WTC11 (cell line): ENCODE measurements at regions of chr6 and their contacts with region 1.

Region 1: GRCh38 chr6:33592411-33593054 is 12.5 kb upstream of the BAK1 start:
- DNase-seq: peak; percentile 84
- ATAC-seq: peak; percentile 75
- H3K4me3 Mint-ChIP-seq: peak overlapping the region; percentile 60
- H3K27ac Mint-ChIP-seq: peak overlapping the region; percentile 93
- H3K4me1 Mint-ChIP-seq: peaks cover 35% of the 10 kb centered on the region
- H3K27me3 Mint-ChIP-seq: no peaks in the 10 kb centered on the region; the same call in none of the 2 replicates
- CTCF ChIP-seq: no peak

Region 2: DNA sequence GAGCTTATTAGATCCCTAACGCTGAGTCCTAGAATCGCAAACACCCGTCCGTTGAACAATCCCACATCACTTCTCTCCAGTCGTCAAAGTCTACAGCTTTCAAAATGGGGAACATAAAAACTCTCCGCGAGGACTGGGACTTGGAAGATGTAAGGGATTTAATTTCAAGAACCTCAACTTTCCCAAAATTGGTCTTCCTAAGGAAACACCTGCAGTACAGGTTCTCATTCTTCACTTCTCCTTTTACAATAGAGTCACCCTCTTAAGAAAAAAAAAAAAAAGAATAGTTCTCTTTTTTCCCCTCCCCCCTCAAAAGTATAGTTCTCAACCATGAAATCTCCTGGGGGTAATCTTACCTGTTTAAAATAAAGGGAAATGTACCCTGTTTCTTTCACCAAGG is 268.4 kb before region 1 on chr6:
- CTCF ChIA-PET with region 1: no interaction called
- POLR2A ChIA-PET with region 1: interaction called, 11 read pairs
- DNase-seq: no peak
- ATAC-seq: no peak
- H3K4me3 Mint-ChIP-seq: peak overlapping the region; percentile 91
- H3K27ac Mint-ChIP-seq: no peak overlapping the region
- H3K4me1 Mint-ChIP-seq: peaks cover 45% of the 10 kb centered on the region
- H3K27me3 Mint-ChIP-seq: no peaks in the 10 kb centered on the region
- CTCF ChIP-seq: no peak

Region 3: GRCh38 chr6:33502486-33502885 is 90.0 kb before region 1 on chr6:
- CTCF ChIA-PET with region 1: no interaction called
- POLR2A ChIA-PET with region 1: no interaction called
- DNase-seq: no peak
- ATAC-seq: no peak
- H3K4me3 Mint-ChIP-seq: no peak overlapping the region
- H3K27ac Mint-ChIP-seq: no peak overlapping the region
- H3K4me1 Mint-ChIP-seq: peaks cover 9% of the 10 kb centered on the region
- H3K27me3 Mint-ChIP-seq: peaks cover 11% of the 10 kb centered on the region
- CTCF ChIP-seq: no peak

Region 4: DNA sequence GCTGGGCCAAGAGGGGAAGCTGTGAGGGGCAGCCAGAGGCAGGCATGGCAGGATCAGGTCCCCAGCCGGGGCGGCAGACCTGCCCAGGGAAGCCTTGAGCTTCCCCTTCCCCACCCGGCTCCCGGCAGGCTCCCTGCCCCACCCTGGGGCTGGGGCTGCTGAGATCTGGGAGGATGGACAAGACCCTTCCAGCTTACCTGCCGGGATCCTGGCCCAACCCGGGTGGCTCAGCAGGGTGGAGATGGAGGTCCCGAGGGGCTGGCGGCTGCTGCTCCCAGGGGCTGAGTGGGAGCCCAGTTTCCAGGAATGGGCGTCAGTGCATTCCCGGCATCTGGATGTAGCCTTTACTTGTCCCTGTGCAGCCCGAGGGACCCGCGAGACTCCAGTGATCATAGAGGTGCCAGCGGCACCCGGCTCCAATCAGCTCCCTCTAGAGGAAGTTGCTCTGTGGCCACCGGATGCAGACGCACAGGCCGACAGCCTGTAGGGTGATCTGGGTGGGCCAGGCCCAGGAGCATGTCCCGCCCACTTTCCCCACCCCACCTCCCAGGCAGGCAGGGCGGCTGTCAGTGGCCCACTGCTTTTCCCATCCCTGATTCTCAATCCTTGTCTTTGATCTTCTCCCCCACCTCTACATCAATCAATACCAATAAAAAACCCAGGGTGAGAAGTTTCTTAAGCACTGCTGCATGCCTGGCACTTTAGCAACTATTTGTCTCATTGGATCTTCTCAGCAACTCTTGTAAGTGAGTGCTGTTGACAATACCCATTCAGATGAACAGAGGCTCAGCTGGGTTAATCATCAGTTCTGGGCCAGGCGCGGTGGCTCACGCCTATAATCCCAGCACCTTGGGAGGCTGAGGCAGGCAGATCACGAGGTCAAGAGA is 12.5 kb before region 1 on chr6 and contains the start of gene BAK1:
- CTCF ChIA-PET with region 1: interaction called, 17 read pairs
- POLR2A ChIA-PET with region 1: no interaction called
- DNase-seq: peak; percentile 91
- ATAC-seq: peak; percentile 96
- H3K4me3 Mint-ChIP-seq: peak within 1 kb of the TSS; percentile 77
- H3K27ac Mint-ChIP-seq: no peak within 1 kb of the TSS
- H3K4me1 Mint-ChIP-seq: peaks cover 14% of the 10 kb centered on the region
- H3K27me3 Mint-ChIP-seq: no peaks in the 10 kb centered on the region
- CTCF ChIP-seq: no peak
- total RNA-seq, gene BAK1: 40.5 to 40.9 TPM (median 40.5 TPM) in 3 replicates

Region 5: DNA sequence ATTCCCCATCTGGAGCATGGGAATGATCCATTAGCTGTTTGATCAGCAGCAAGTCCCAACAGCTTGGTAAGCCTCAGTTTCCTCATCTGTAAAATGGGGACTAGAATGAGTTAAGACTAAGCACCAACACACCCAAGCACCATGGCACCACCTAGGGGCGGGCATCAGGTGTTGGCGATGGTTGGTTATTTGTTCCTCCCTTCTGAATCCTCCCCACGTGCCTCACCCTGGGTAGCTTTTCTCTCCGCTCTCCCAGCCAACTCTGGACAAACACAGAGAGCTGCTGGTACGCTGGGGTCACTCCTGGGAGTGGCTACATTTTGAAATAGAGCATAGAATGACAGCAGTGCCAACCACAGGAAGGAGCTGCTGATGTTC is 15.2 kb after region 1 on chr6:
- CTCF ChIA-PET with region 1: interaction called, 29 read pairs
- POLR2A ChIA-PET with region 1: no interaction called
- DNase-seq: no peak
- ATAC-seq: no peak
- H3K4me3 Mint-ChIP-seq: no peak overlapping the region
- H3K27ac Mint-ChIP-seq: no peak overlapping the region
- H3K4me1 Mint-ChIP-seq: peaks cover 45% of the 10 kb centered on the region
- H3K27me3 Mint-ChIP-seq: no peaks in the 10 kb centered on the region; the same call in 1 of the 2 replicates
- CTCF ChIP-seq: no peak

Region 6: GRCh38 chr6:33620856-33621710 is 28.6 kb after region 1 on chr6 and contains the start of gene ITPR3:
- CTCF ChIA-PET with region 1: interaction called, 31 read pairs
- POLR2A ChIA-PET with region 1: interaction called, 10 read pairs
- DNase-seq: no peak
- ATAC-seq: peak; percentile 47
- H3K4me3 Mint-ChIP-seq: peak within 1 kb of the TSS; percentile 91
- H3K27ac Mint-ChIP-seq: no peak within 1 kb of the TSS; the same call in 1 of the 2 replicates
- H3K4me1 Mint-ChIP-seq: peaks cover 46% of the 10 kb centered on the region
- H3K27me3 Mint-ChIP-seq: peaks cover 15% of the 10 kb centered on the region
- CTCF ChIP-seq: no peak
- total RNA-seq, gene ITPR3: 42.5 to 47.3 TPM (median 42.9 TPM) in 3 replicates

Region 7: GRCh38 chr6:33633462-33634158 is 41.1 kb after region 1 on chr6:
- CTCF ChIA-PET with region 1: interaction called, 71 read pairs
- POLR2A ChIA-PET with region 1: no interaction called
- DNase-seq: peak; percentile 58
- ATAC-seq: peak; percentile 69
- H3K4me3 Mint-ChIP-seq: peak overlapping the region; percentile 83
- H3K27ac Mint-ChIP-seq: peak overlapping the region; percentile 47
- H3K4me1 Mint-ChIP-seq: peaks cover 59% of the 10 kb centered on the region
- H3K27me3 Mint-ChIP-seq: peaks cover 9% of the 10 kb centered on the region; the same call in 1 of the 2 replicates
- CTCF ChIP-seq: no peak